ENCODE measurements at regions of chr2 and their contacts with region 1.

Region 1: GRCh38 chr2:170928824-170929685 is at the start of gene GORASP2:
- DNase-seq: peak; percentile 99
- ATAC-seq: peak; percentile 94
- H3K4me3 Mint-ChIP-seq: peak within 1 kb of the TSS; percentile 96
- H3K27ac Mint-ChIP-seq: peak within 1 kb of the TSS; percentile 96
- H3K4me1 Mint-ChIP-seq: peaks cover 36% of the 10 kb centered on the region
- H3K27me3 Mint-ChIP-seq: no peaks in the 10 kb centered on the region
- total RNA-seq, gene GORASP2: 66.5 to 69.8 TPM

Region 2: DNA sequence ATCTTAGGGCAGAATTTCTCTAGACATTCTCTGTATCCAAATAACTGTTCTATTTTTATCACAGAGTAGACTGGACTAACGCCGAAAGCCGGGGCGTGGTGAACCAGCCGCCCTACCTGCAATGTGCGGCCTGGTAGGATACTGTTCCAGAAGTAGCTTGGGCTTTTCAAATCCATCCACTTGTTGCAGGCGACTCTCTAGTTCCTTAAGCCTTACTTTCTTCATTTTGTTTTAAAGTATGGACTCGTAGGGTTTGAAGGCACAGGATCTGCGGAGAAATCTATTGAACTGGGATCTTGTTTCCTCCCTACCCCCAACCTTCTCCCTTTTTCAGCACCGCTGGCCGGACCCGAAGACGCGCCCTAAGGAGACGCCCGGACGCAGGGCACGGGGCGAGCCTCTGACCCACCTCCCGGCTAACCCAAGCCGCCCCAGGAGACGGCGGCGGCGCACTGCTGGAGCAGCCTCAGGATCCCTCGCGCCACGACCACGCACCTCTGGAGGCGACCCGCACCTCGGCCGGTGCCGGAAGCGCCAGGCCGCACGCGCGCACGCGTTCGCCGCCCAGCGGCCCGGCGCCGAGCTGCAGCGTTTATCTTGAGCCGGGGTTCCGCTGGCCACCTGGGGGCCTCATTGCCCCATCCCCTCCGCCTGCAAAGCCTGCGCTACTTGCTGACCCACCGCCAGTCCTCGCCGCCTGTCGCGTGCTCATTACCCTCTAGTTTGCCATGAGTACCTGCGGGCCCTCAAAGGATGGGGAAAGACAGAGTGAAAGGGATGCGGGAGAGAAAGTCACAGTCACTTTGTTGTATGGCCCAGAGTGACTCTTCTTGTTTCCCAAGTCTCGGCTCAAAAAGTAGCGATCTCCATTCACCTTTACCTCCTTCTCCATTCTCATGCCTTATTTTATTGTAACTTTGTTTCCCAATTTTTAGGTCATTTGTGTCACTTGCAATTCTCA is 1104.4 kb before region 1 on chr2 and contains the start of gene METTL5:
- CTCF ChIA-PET with region 1: no interaction called
- POLR2A ChIA-PET with region 1: no interaction called
- intact Hi-C with region 1: loop called in 1 of 2 experiments (anchors 10 kb)
- DNase-seq: peak; percentile 89
- ATAC-seq: peak; percentile 72
- H3K4me3 Mint-ChIP-seq: peak within 1 kb of the TSS; percentile 83
- H3K27ac Mint-ChIP-seq: peak within 1 kb of the TSS; percentile 89
- H3K4me1 Mint-ChIP-seq: peaks cover 55% of the 10 kb centered on the region
- H3K27me3 Mint-ChIP-seq: no peaks in the 10 kb centered on the region
- total RNA-seq, gene METTL5: 129 to 165 TPM

Region 3: GRCh38 chr2:170554278-170554955 is 374.6 kb before region 1 on chr2:
- CTCF ChIA-PET with region 1: no interaction called
- POLR2A ChIA-PET with region 1: no interaction called
- intact Hi-C with region 1: no loop called
- DNase-seq: no peak
- ATAC-seq: no peak
- H3K4me3 Mint-ChIP-seq: no peak overlapping the region
- H3K27ac Mint-ChIP-seq: no peak overlapping the region
- H3K4me1 Mint-ChIP-seq: no peaks in the 10 kb centered on the region
- H3K27me3 Mint-ChIP-seq: peaks cover 2% of the 10 kb centered on the region

Region 4: GRCh38 chr2:170761572-170761971 is 167.5 kb before region 1 on chr2:
- CTCF ChIA-PET with region 1: no interaction called
- POLR2A ChIA-PET with region 1: no interaction called
- intact Hi-C with region 1: no loop called
- DNase-seq: no peak
- ATAC-seq: no peak
- H3K4me3 Mint-ChIP-seq: no peak overlapping the region
- H3K27ac Mint-ChIP-seq: no peak overlapping the region
- H3K4me1 Mint-ChIP-seq: peaks cover 10% of the 10 kb centered on the region
- H3K27me3 Mint-ChIP-seq: no peaks in the 10 kb centered on the region

Region 5: GRCh38 chr2:170940066-170940465 is 11.0 kb after region 1 on chr2:
- CTCF ChIA-PET with region 1: interaction called, 16 read pairs
- POLR2A ChIA-PET with region 1: interaction called, 6 read pairs
- intact Hi-C with region 1: no loop called
- DNase-seq: no peak
- ATAC-seq: no peak
- H3K4me3 Mint-ChIP-seq: no peak overlapping the region
- H3K27ac Mint-ChIP-seq: peak overlapping the region; percentile 3
- H3K4me1 Mint-ChIP-seq: peaks cover 68% of the 10 kb centered on the region
- H3K27me3 Mint-ChIP-seq: no peaks in the 10 kb centered on the region

Region 6: DNA sequence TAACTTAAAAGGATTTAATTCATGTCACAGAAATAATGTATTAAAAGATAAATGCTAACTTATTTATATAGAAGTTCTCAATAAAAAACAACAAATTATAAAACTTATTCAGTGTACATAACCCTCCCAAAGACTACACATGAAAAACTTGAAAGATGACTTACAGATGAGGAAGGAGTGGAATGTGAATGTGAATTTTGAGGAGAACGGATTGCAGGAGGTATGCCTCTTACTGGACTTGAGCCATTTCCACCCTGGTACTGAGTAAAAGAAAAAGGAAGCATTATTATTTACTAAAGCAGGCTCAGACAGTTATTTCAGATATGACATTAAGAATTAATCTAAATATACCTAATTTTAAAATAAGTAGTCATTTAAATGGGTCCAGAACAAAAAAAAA is 127.3 kb after region 1 on chr2:
- CTCF ChIA-PET with region 1: no interaction called
- POLR2A ChIA-PET with region 1: no interaction called
- intact Hi-C with region 1: no loop called
- DNase-seq: no peak
- ATAC-seq: no peak
- H3K4me3 Mint-ChIP-seq: no peak overlapping the region
- H3K27ac Mint-ChIP-seq: no peak overlapping the region
- H3K4me1 Mint-ChIP-seq: no peaks in the 10 kb centered on the region
- H3K27me3 Mint-ChIP-seq: no peaks in the 10 kb centered on the region

Region 7: GRCh38 chr2:171260471-171261424 is 331.7 kb after region 1 on chr2:
- CTCF ChIA-PET with region 1: no interaction called
- POLR2A ChIA-PET with region 1: no interaction called
- intact Hi-C with region 1: loop called in 1 of 2 experiments (anchors 2 kb)
- DNase-seq: peak; percentile 50
- ATAC-seq: peak; percentile 90
- H3K4me3 Mint-ChIP-seq: peak overlapping the region; percentile 34
- H3K27ac Mint-ChIP-seq: peak overlapping the region; percentile 64
- H3K4me1 Mint-ChIP-seq: peaks cover 34% of the 10 kb centered on the region
- H3K27me3 Mint-ChIP-seq: no peaks in the 10 kb centered on the region

Region 8: DNA sequence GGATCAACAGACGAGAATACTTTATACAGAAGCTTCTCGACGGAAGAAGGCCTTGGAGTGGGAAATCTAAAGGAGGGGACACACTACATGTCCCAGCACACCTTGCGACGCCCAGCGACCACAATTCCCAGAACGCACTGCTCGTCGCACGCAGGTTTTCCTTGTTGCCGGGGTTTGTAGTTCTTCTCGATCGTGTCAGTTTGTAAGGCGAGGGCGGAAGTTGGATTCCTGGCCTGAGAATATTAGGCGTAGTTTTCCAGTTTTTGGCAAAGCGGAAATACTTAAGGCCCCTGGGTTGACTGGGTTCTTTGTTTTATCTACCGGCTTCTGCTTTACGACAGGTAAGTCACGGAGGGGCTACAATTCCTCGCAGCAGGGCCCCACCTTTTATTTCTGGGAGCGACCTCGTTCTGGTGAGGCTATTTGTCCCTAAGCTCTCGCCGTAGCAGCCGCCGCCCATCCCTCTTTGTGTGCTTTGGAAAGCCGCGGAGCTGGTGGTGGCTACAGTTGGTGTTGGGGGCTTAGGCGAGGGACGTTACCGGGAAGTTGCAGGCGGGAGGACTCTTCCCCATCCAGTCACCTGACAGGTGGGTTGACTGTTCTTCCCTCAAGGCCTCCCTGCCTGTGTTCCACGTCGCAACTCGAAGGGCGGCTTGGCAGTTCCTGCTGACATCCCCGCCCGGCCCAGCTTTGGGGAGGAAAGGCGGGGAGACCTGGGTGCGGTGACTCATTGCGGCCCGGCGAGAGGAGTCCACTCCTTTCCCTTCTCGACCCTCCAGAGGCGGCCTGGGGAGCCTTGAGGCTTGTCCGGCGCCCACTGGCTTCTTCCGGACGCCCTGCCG is 758.5 kb after region 1 on chr2 and contains the start of gene DYNC1I2:
- CTCF ChIA-PET with region 1: interaction called, 3 read pairs
- POLR2A ChIA-PET with region 1: no interaction called
- intact Hi-C with region 1: loop called in 1 of 2 experiments (anchors 2 kb)
- DNase-seq: peak; percentile 86
- ATAC-seq: peak; percentile 95
- H3K4me3 Mint-ChIP-seq: peak within 1 kb of the TSS; percentile 83
- H3K27ac Mint-ChIP-seq: peak within 1 kb of the TSS; percentile 90
- H3K4me1 Mint-ChIP-seq: peaks cover 15% of the 10 kb centered on the region
- H3K27me3 Mint-ChIP-seq: no peaks in the 10 kb centered on the region
- total RNA-seq, gene DYNC1I2: 46.2 to 51.1 TPM

Region 9: GRCh38 chr2:172427256-172427989 is 1498.4 kb after region 1 on chr2 and contains the start of gene ITGA6:
- CTCF ChIA-PET with region 1: no interaction called
- POLR2A ChIA-PET with region 1: no interaction called
- intact Hi-C with region 1: loop called in 1 of 2 experiments (anchors 5 kb)
- DNase-seq: peak; percentile 85
- ATAC-seq: peak; percentile 59
- H3K4me3 Mint-ChIP-seq: peak within 1 kb of the TSS; percentile 80
- H3K27ac Mint-ChIP-seq: peak within 1 kb of the TSS; percentile 73
- H3K4me1 Mint-ChIP-seq: peaks cover 79% of the 10 kb centered on the region
- H3K27me3 Mint-ChIP-seq: peaks cover 2% of the 10 kb centered on the region
- total RNA-seq, gene ITGA6: 7.8 to 7.9 TPM

Measured in activated CD4-positive, alpha-beta T cell treated with anti-CD3 and anti-CD28 coated beads for 36 hours (primary cell).